ENCODE measurements at regions of chr16 and their contacts with region 1.

Region 1: GRCh38 chr16:3150346-3151218 is 15.8 kb downstream of the ZNF213 start:
- DNase-seq: peak; percentile 99
- ATAC-seq: peak; percentile 85
- H3K4me3 Mint-ChIP-seq: peak overlapping the region; percentile 79
- H3K27ac Mint-ChIP-seq: peak overlapping the region; percentile 89
- H3K4me1 Mint-ChIP-seq: peaks cover 22% of the 10 kb centered on the region
- H3K27me3 Mint-ChIP-seq: peaks cover 2% of the 10 kb centered on the region

Region 2: GRCh38 chr16:3029537-3030402 is 120.8 kb before region 1 on chr16:
- CTCF ChIA-PET with region 1: interaction called, 15 read pairs
- POLR2A ChIA-PET with region 1: no interaction called
- intact Hi-C with region 1: loop called in 1 of 2 experiments (anchors 1 kb)
- DNase-seq: peak; percentile 85
- ATAC-seq: peak; percentile 69
- H3K4me3 Mint-ChIP-seq: peak overlapping the region; percentile 67
- H3K27ac Mint-ChIP-seq: peak overlapping the region; percentile 65
- H3K4me1 Mint-ChIP-seq: peaks cover 23% of the 10 kb centered on the region
- H3K27me3 Mint-ChIP-seq: peaks cover 38% of the 10 kb centered on the region

Region 3: DNA sequence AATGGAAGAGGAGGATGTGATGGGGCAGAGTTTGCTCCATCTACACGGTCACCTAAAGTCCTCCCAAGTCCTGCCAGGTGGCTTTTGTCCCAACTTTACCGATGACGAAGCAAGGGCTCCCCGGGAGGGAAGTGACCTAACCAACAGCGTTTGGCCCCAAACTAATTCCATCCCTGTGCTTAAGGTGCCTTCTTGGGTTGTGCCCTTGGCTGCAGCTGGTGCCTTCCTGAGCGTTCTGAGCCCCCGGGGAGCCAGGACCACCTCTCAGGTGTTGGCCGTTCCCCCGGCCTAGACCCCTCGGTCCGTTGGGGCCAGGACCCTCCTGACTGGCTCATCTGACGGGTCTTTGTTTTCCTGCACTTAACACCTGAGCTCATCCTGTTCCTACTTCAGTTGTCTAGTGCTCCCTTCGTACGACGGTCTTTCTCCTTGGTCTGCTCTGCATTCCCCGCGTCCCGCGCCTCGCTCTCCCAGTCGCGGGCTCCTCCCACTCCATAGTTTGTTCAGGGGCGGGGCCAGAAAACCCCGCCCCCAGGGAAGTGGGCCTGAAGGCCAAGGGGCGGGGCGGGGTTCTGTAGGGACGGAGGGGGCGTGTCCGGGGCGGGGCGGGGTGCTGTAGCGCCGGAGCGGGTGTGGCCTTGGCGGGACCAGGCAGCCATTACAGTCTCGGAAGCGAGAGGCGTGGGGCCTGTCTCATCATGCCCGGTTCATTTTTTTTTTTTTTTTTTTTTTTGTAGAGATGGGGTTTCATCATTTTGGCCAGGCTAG is 50.7 kb before region 1 on chr16:
- CTCF ChIA-PET with region 1: interaction called, 5 read pairs
- POLR2A ChIA-PET with region 1: no interaction called
- intact Hi-C with region 1: loop called in 1 of 2 experiments (anchors 1 kb)
- DNase-seq: peak; percentile 99
- ATAC-seq: peak; percentile 84
- H3K4me3 Mint-ChIP-seq: peak overlapping the region; percentile 68
- H3K27ac Mint-ChIP-seq: peak overlapping the region; percentile 84
- H3K4me1 Mint-ChIP-seq: peaks cover 49% of the 10 kb centered on the region
- H3K27me3 Mint-ChIP-seq: no peaks in the 10 kb centered on the region

Region 4: GRCh38 chr16:3129137-3130131 is 21.1 kb before region 1 on chr16:
- CTCF ChIA-PET with region 1: interaction called, 27 read pairs
- POLR2A ChIA-PET with region 1: interaction called, 16 read pairs
- intact Hi-C with region 1: loop called (anchors 1 kb)
- DNase-seq: peak; percentile 85
- ATAC-seq: peak; percentile 78
- H3K4me3 Mint-ChIP-seq: peak overlapping the region; percentile 84
- H3K27ac Mint-ChIP-seq: peak overlapping the region; percentile 90
- H3K4me1 Mint-ChIP-seq: peaks cover 52% of the 10 kb centered on the region
- H3K27me3 Mint-ChIP-seq: no peaks in the 10 kb centered on the region

Region 5: DNA sequence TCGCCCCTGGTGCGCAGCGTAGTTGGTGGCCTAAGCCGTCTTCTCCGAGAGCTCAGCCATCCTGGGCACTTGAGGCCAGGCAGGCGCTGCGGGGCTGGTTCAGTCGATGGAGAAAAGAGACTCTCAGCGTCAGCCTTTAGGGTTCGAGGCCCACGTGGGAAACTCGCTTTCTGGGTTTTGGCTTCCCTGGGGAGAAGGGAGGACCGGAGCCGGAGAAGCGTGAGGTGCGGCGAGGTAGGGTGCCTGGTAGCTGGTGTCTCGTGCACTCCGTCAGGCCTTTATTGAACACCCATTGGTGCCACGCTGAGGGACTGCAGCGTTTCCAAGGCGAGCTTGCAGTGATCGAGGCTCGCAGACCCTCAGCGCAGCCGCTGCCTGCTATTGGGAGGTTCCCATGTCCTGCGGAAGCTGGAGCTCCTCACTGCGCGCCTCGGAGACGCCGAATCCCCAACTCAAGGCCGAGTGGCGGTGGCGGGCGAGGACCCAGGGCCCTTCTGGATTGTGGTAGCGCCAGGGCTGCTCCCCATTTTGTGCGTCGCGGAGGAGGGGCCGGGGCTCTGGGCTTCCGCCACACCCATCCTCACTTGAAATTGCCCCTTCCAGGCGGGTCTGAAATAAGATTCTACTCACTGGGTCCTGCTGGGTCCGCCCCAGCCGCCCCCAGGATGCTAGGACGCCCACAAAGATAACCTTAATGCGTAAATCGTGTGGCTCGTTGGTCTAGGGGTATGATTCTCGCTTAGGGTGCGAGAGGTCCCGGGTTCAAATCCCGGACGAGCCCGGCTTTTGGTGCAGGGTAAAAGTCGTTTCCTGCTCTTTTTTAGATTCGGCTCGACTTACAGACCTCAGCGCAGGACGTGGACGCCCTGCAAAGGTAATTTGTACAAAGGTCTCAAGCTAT is 38.6 kb after region 1 on chr16:
- CTCF ChIA-PET with region 1: interaction called, 6 read pairs
- POLR2A ChIA-PET with region 1: interaction called, 5 read pairs
- intact Hi-C with region 1: loop called (anchors 1 to 2 kb)
- DNase-seq: peak; percentile 78
- ATAC-seq: peak; percentile 42
- H3K4me3 Mint-ChIP-seq: peak overlapping the region; percentile 69
- H3K27ac Mint-ChIP-seq: peak overlapping the region; percentile 72
- H3K4me1 Mint-ChIP-seq: peaks cover 46% of the 10 kb centered on the region
- H3K27me3 Mint-ChIP-seq: peaks cover 66% of the 10 kb centered on the region

Region 6: DNA sequence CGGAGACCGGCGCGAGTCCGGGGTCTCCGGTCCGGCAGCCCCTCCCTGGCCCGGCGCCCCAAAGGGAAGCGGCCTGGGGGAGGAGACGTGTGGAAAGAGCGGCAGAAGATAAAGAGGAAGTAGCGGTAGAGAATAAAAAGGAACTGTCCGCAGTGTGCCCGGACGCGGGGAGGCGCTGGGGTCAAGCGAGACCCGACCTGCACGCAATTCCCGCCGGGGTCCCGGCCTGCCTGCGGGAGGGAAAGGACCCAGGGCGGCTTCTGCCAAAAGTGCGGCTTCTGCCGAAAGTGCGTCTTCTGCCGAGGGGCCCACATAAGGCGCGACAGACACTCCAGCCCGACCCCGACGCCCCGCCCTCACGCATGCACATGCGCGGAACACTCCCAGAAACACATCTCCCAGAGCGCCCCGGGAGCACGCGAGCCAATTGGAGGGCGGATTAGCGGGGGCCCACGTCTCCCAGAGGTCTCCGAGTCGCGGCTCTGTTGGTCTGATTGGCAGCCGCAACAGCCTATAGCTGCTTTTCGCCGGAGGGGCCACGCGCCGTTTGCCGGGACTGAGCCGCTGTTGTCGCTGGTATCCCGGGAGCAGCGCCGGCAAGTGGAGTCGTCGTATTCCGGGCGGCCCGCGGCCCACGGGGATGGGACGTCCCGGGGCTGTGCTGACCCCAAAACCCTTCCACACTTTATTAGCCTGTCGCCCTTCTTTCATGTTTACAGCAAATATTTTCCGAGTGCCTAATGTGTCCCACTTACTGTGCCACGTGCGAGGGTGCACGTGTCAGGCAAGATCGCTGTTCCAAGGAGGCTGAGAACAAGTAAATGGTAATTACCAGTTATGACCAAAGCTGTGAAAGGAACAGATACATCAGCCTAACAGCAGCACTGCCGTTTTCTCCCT is 113.8 kb after region 1 on chr16:
- CTCF ChIA-PET with region 1: interaction called, 5 read pairs
- POLR2A ChIA-PET with region 1: no interaction called
- intact Hi-C with region 1: loop called in 1 of 2 experiments (anchors 1 kb)
- DNase-seq: peak; percentile 99
- ATAC-seq: peak; percentile 95
- H3K4me3 Mint-ChIP-seq: peak overlapping the region; percentile 83
- H3K27ac Mint-ChIP-seq: peak overlapping the region; percentile 90
- H3K4me1 Mint-ChIP-seq: peaks cover 25% of the 10 kb centered on the region
- H3K27me3 Mint-ChIP-seq: no peaks in the 10 kb centered on the region

Region 7: DNA sequence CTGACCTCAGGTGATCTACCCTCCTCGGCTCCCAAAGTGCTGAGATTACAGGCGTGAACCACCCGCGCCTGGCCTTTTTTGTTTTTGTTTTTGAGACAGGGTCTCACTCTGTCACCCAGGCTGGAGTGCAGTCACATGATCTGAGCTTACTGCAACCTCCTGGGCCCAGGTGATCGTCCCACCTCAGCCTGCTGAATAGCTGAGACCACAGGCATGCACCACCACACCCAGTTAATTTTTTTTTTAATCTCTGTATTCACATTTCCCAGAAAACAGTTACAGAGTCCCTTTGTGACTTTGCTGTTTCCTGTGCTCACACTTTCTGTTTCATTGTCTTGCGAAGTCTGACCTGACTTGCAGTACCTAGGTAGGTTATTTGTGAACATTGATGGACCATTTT is 352.9 kb after region 1 on chr16:
- CTCF ChIA-PET with region 1: interaction called, 3 read pairs
- POLR2A ChIA-PET with region 1: no interaction called
- intact Hi-C with region 1: loop called in 1 of 2 experiments (anchors 5 kb)
- DNase-seq: peak; percentile 77
- ATAC-seq: peak; percentile 60
- H3K4me3 Mint-ChIP-seq: peak overlapping the region; percentile 65
- H3K27ac Mint-ChIP-seq: peak overlapping the region; percentile 91
- H3K4me1 Mint-ChIP-seq: peaks cover 62% of the 10 kb centered on the region
- H3K27me3 Mint-ChIP-seq: no peaks in the 10 kb centered on the region

Region 8: GRCh38 chr16:4775005-4775404 is 1624.4 kb after region 1 on chr16:
- CTCF ChIA-PET with region 1: no interaction called
- POLR2A ChIA-PET with region 1: no interaction called
- intact Hi-C with region 1: no loop called
- DNase-seq: no peak
- ATAC-seq: no peak
- H3K4me3 Mint-ChIP-seq: no peak overlapping the region
- H3K27ac Mint-ChIP-seq: no peak overlapping the region
- H3K4me1 Mint-ChIP-seq: no peaks in the 10 kb centered on the region
- H3K27me3 Mint-ChIP-seq: no peaks in the 10 kb centered on the region

Measured in activated CD4-positive, alpha-beta T cell treated with anti-CD3 and anti-CD28 coated beads for 36 hours (primary cell).